ENCODE measurements at regions of chr14 and their contacts with region 1.

Region 1: GRCh38 chr14:101559624-101560533 is 1.4 kb upstream of the DIO3 start:
- DNase-seq: peak; percentile 81
- H3K4me3 ChIP-seq: peak overlapping the region; percentile 57 to 64 (median 61)
- H3K27ac ChIP-seq: peak overlapping the region; percentile 38 to 75 (median 66)
- H3K4me1 ChIP-seq: peaks cover 0 to 22% (median 11%) of the 10 kb centered on the region in 4 donors
- H3K27me3 ChIP-seq: peaks cover 36 to 77% (median 39%) of the 10 kb centered on the region in 3 donors
- CTCF ChIP-seq: peak in 1 of 4 experiments; percentile 24
- EP300 ChIP-seq: no peak
- POLR2A ChIP-seq: no peak

Region 2: GRCh38 chr14:100383727-100384158 is 1176.1 kb before region 1 on chr14:
- intact Hi-C with region 1: loop called (anchors 5 kb)
- DNase-seq: peak; percentile 74
- H3K4me3 ChIP-seq: no peak overlapping the region
- H3K27ac ChIP-seq: no peak overlapping the region
- H3K4me1 ChIP-seq: peaks cover 0 to 20% (median 5%) of the 10 kb centered on the region in 4 donors
- H3K27me3 ChIP-seq: no peaks in the 10 kb centered on the region
- CTCF ChIP-seq: peak; percentile 15 to 80 (median 65)
- EP300 ChIP-seq: no peak
- POLR2A ChIP-seq: no peak

Region 3: DNA sequence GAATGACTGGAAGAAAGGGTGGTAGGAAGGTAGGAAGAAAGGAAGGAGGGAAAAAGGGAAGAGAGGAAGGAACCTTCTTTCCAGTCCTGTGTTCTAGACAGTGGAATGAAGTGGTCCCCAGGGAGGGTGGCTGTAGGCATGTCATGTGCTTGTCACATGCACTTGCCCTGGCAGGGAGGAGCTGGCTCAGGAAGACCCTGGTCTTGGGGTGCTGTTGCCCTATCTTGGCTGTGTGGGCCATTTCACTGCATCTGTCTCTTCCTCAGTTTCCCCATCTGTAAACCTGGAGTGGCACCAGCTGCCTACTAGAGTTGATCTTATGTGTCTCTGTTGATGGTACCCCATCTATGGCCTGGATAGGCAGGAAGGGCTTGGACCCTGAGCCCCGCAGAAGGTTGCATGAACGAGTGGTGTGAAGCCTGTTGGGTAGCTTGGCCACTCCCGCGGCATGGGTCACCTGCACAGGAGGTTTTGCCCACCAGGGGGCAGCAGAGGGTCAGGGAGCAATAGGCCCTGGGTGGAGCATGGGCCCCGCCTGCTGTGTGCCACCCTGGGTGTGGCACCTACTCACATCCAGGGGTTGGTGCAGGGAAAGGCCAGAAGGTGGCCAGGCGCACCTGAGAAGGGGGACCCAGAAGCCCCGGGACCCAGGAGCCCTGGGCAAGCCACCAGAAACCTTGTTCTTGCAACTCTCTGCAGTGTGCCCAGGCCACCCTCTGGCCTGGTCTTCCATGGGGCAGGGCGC is 708.9 kb before region 1 on chr14:
- intact Hi-C with region 1: loop called (anchors 2 kb)
- DNase-seq: peak; percentile 83
- H3K4me3 ChIP-seq: no peak overlapping the region
- H3K27ac ChIP-seq: no peak overlapping the region
- H3K4me1 ChIP-seq: no peaks in the 10 kb centered on the region
- H3K27me3 ChIP-seq: no peaks in the 10 kb centered on the region
- CTCF ChIP-seq: peak; percentile 55 to 76 (median 72)
- EP300 ChIP-seq: no peak
- POLR2A ChIP-seq: no peak

Region 4: DNA sequence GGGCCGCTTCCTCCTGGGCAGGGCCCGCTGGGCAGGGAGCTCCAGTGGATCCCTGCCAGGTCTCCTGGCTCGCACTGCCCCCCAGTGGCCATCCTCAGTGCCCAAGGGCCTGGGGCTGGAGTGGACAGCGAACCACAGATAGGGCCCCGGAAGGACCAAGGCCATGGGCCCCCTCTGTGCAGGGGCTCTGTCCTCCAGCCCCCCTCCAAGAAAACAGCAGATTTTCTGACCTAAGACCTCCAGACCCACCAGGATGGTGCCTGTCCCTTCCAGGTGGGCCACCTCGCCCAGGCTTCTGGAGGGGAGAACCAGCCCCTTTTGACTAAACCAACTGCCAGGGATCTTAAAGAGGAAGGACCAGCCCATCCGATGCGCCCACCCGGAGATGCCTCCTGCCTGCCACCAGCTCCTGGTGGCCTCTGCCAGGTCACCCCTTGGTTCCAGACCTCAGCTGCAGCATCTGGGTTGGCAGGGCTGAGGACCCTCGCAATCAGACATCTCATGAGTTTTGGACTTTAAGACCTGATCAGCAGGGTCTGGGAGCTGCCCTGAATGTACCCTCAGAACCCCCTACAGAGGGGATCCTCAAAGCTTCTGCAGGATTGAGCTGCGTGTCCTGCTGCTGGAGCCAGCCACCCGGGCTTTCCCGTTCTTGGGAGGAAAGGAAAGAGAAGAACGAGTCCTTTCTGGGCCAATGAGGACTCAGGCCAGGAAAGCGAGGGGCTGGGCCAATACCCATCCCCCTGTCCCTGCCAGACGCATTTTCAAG is 324.4 kb before region 1 on chr14:
- intact Hi-C with region 1: loop called (anchors 5 kb)
- DNase-seq: peak; percentile 79
- H3K4me3 ChIP-seq: no peak overlapping the region
- H3K27ac ChIP-seq: no peak overlapping the region
- H3K4me1 ChIP-seq: peaks cover 0 to 13% (median 11%) of the 10 kb centered on the region in 4 donors
- H3K27me3 ChIP-seq: no peaks in the 10 kb centered on the region
- CTCF ChIP-seq: peak; percentile 42 to 70 (median 64)
- EP300 ChIP-seq: no peak
- POLR2A ChIP-seq: no peak

Region 5: GRCh38 chr14:101458526-101459391 is 101.1 kb before region 1 on chr14:
- intact Hi-C with region 1: loop called (anchors 5 kb)
- DNase-seq: no peak
- H3K4me3 ChIP-seq: peak overlapping the region in 2 of 4 donors; percentile 24 to 27
- H3K27ac ChIP-seq: no peak overlapping the region
- H3K4me1 ChIP-seq: peaks cover 0 to 21% (median 15%) of the 10 kb centered on the region in 4 donors
- H3K27me3 ChIP-seq: peaks cover 33 to 68% (median 53%) of the 10 kb centered on the region in 3 donors
- CTCF ChIP-seq: no peak
- EP300 ChIP-seq: no peak
- POLR2A ChIP-seq: no peak